H1 (cell line): ENCODE measurements at regions of chr20 and their contacts with region 1.

Region 1: DNA sequence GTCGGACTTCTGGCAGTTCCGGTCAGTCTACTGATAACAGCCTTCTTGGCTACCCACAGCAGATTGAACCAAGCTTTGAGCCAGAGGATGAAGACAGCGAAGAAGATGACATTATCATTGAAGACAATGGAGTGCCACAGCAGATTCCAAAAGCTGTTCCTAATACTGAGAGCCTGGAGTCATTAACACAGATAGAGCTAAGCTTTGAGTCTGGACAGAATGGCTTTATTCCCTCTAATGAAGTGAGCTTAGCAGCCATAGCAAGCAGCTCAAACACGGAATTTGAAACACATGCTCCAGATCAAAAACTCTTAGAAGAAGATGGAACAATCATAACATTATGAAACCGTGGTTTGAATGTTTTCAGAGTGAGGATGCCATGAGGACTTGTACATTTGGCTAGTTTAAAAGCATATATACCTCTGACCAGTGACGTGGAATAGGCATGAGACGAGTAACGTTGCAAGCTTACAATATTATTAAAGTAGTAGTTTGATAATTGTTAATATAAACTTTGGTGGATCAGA is 18.8 kb downstream of the PARD6B start:
- DNase-seq: peak in 1 of 2 experiments; percentile 20
- H3K4me3 ChIP-seq: no peak overlapping the region
- H3K27ac ChIP-seq: no peak overlapping the region
- H3K4me1 ChIP-seq: no peaks in the 10 kb centered on the region
- H3K27me3 ChIP-seq: no peaks in the 10 kb centered on the region
- CTCF ChIP-seq: no peak
- EP300 ChIP-seq: no peak
- POLR2A ChIP-seq: no peak
- RAD21 ChIP-seq: no peak

Region 2: GRCh38 chr20:50690634-50691572 is 59.3 kb before region 1 on chr20 and contains the start of gene RIPOR3:
- CTCF ChIA-PET with region 1: interaction called, 28 read pairs
- POLR2A ChIA-PET with region 1: interaction called, 4 read pairs
- DNase-seq: peak in 1 of 2 experiments; percentile 67
- H3K4me3 ChIP-seq: peak within 1 kb of the TSS; percentile 31 to 64 (median 50)
- H3K27ac ChIP-seq: no peak within 1 kb of the TSS
- H3K4me1 ChIP-seq: peaks cover 16 to 24% (median 18%) of the 10 kb centered on the region in 4 experiments
- H3K27me3 ChIP-seq: 0 out of 7 replicates have a peak, but pooled peaks cover 0 to 2% (median 0%) of the 10 kb centered on the region in 4 experiments
- CTCF ChIP-seq: no peak
- EP300 ChIP-seq: no peak
- POLR2A ChIP-seq: no peak
- RAD21 ChIP-seq: no peak
- total RNA-seq, gene RIPOR3: 4.5 and 4.7 TPM in 2 replicates

Region 3: DNA sequence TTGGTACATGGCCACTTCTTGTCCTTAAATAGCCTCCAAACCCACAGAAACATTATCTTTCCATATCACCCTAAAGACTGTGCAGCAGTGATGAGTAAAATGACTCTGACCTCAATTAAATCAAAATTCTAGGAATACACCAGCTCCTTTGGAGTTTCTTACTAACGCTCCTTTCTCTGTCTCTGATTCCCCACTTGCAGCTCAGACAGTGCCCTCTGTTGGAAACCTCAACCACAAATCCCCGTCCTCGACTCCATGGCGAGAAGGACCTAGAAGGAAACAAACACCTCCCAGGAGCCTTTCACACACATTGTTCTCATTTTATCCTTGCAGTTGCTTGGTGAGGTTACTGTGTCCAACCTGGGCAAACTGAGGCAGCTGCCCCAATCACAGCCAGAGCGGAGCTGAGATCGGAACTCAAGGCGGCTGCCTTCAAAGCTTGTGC is 36.5 kb before region 1 on chr20:
- CTCF ChIA-PET with region 1: interaction called, 25 read pairs
- POLR2A ChIA-PET with region 1: interaction called, 4 read pairs
- DNase-seq: peak in 1 of 2 experiments; percentile 56
- H3K4me3 ChIP-seq: no peak overlapping the region
- H3K27ac ChIP-seq: no peak overlapping the region
- H3K4me1 ChIP-seq: peaks cover 0 to 3% (median 2%) of the 10 kb centered on the region in 4 experiments; a peak in 1 of 7 replicates
- H3K27me3 ChIP-seq: no peaks in the 10 kb centered on the region
- CTCF ChIP-seq: peak; percentile 46 to 68 (median 66)
- EP300 ChIP-seq: no peak
- POLR2A ChIP-seq: no peak
- RAD21 ChIP-seq: peak; percentile 65 to 76

Region 4: GRCh38 chr20:50731055-50731871 is 18.9 kb before region 1 on chr20 and contains the start of gene PARD6B:
- CTCF ChIA-PET with region 1: interaction called, 27 read pairs
- POLR2A ChIA-PET with region 1: interaction called, 6 read pairs
- DNase-seq: peak; percentile 98 to 99
- H3K4me3 ChIP-seq: peak within 1 kb of the TSS; percentile 80 to 96 (median 92)
- H3K27ac ChIP-seq: peak within 1 kb of the TSS; percentile 72
- H3K4me1 ChIP-seq: peaks cover 2 to 9% (median 6%) of the 10 kb centered on the region in 4 experiments; a peak in 5 of 7 replicates
- H3K27me3 ChIP-seq: no peaks in the 10 kb centered on the region
- CTCF ChIP-seq: no peak
- EP300 ChIP-seq: peak in 1 of 2 experiments; percentile 46; a peak in 1 of 3 replicates
- POLR2A ChIP-seq: peak; percentile 40 to 66
- RAD21 ChIP-seq: no peak; a peak in 1 of 4 replicates
- total RNA-seq, gene PARD6B: 27.3 and 34.1 TPM in 2 replicates

Region 5: DNA sequence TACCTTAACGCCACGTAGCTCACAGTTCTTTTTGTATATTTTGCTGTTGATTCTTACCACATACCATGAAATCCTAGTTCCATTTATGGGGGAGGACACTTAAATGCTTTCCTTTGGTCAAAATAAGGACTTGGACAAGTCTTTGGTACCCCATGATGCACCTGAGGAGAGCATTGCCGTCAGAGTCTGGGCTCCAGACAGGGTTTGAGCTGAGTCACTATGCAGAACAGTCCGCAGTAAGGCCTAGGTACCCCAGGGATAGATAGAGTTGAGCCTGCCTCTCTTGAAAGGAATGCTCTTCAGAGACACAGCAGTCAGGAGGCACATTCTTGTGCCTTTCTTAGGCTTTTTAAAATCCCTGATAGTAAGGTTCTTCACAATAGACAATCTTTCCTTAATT is 12.9 kb before region 1 on chr20:
- CTCF ChIA-PET with region 1: interaction called, 27 read pairs
- POLR2A ChIA-PET with region 1: interaction called, 13 read pairs
- DNase-seq: peak in 1 of 2 experiments; percentile 39
- H3K4me3 ChIP-seq: no peak overlapping the region
- H3K27ac ChIP-seq: no peak overlapping the region
- H3K4me1 ChIP-seq: peaks cover 2 to 7% (median 5%) of the 10 kb centered on the region in 4 experiments; a peak in 4 of 7 replicates
- H3K27me3 ChIP-seq: no peaks in the 10 kb centered on the region
- CTCF ChIP-seq: no peak
- EP300 ChIP-seq: no peak
- POLR2A ChIP-seq: no peak
- RAD21 ChIP-seq: no peak

Region 6: GRCh38 chr20:50762435-50763201 is 12.4 kb after region 1 on chr20:
- CTCF ChIA-PET with region 1: interaction called, 23 read pairs
- POLR2A ChIA-PET with region 1: interaction called, 10 read pairs
- DNase-seq: peak in 1 of 2 experiments; percentile 41
- H3K4me3 ChIP-seq: no peak overlapping the region
- H3K27ac ChIP-seq: no peak overlapping the region
- H3K4me1 ChIP-seq: peaks cover 3 to 9% (median 4%) of the 10 kb centered on the region in 4 experiments; a peak in 5 of 7 replicates
- H3K27me3 ChIP-seq: no peaks in the 10 kb centered on the region
- CTCF ChIP-seq: no peak
- EP300 ChIP-seq: no peak
- POLR2A ChIP-seq: no peak
- RAD21 ChIP-seq: no peak

Region 7: DNA sequence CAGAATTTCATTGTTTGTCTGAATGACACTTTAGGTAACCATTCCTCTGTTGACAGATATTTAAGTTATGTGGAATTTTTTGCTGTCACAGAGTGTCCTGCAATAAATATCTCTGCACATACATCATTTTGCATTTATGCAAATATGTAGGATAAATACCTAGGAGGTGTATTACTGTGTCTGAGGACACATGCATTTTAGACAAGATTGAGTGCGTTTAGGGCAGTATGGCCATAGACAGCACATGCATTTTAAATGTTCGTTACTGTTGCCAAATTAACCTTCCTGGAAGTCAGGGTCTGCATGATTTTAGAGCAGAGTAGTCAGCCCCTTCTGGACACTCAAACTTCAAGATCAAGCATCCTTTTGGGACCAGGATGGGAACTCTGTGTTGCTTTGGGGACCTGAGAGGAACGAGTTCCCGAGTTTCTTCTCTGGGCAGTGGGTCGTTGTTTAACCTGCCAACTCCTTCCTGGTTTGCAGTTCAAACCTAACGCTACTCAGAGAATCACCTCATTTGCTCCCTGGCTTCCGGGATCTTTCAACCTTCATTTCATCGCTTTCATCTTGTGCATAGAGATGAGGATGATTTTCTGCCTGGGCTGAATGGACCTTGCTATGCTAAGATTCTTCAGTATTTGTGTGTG is 54.3 kb after region 1 on chr20:
- CTCF ChIA-PET with region 1: no interaction called
- POLR2A ChIA-PET with region 1: no interaction called
- DNase-seq: no peak
- H3K4me3 ChIP-seq: no peak overlapping the region
- H3K27ac ChIP-seq: no peak overlapping the region
- H3K4me1 ChIP-seq: peaks cover 0 to 11% (median 3%) of the 10 kb centered on the region in 4 experiments; a peak in 5 of 7 replicates
- H3K27me3 ChIP-seq: no peaks in the 10 kb centered on the region
- CTCF ChIP-seq: no peak
- EP300 ChIP-seq: no peak
- POLR2A ChIP-seq: no peak
- RAD21 ChIP-seq: no peak

Region 8: DNA sequence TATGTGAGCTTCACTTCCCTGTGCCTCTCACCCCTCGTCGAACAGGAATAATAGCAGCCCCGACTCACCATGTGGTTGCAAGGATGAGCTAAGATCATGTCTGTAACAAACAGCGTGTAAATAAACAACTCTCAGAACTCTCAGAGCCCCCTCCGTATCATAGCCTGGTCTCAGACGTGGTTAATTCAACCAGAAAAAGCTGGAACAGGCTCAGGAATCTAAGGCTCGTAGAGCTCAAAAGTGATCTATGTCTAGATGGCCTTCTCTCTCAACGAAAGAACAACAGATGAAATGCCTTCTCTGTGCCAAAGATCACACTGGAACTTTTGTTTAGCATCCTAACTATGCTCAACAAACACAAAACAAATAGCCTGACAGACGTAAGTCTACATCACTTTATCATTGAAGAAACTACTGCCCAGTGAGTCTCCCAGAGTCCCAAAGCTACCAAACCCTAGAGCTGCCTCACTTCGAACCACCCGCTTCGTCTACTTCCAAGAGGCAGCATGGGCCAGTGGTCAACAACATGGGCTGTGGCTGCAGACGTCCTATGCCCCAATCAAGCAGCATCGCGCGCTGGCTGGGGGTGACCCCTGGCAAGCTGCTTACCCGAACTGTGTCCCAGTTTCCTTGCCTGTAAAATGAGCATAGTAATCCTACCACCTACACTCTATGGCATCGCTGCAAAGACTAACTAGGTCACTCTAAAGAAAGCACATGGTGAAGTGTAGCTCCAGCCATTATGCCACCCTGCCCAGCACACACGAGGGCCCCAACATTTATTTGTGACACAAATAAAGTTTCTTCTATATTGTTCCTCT is 757.2 kb after region 1 on chr20:
- CTCF ChIA-PET with region 1: no interaction called
- POLR2A ChIA-PET with region 1: no interaction called
- DNase-seq: no peak
- H3K4me3 ChIP-seq: no peak overlapping the region
- H3K27ac ChIP-seq: no peak overlapping the region
- H3K4me1 ChIP-seq: no peaks in the 10 kb centered on the region
- H3K27me3 ChIP-seq: no peaks in the 10 kb centered on the region; a peak in 1 of 7 replicates
- CTCF ChIP-seq: no peak
- EP300 ChIP-seq: no peak
- POLR2A ChIP-seq: no peak
- RAD21 ChIP-seq: no peak